ENCODE measurements at regions of chr2 and their contacts with region 1.

Region 1: GRCh38 chr2:85437488-85438284 is 19.2 kb downstream of the SH2D6 start:
- DNase-seq: peak; percentile 63 to 93 (median 86)
- H3K4me3 ChIP-seq: peak overlapping the region; percentile 5 to 63 (median 45)
- H3K27ac ChIP-seq: peak overlapping the region; percentile 86 to 100 (median 100)
- H3K27me3 ChIP-seq: no peaks in the 10 kb centered on the region
- CTCF ChIP-seq: peak in 20 of 56 donors; percentile 4 to 31 (median 22)

Region 2: GRCh38 chr2:84187258-84187657 is 1250.4 kb before region 1 on chr2:
- intact Hi-C with region 1: no loop called
- DNase-seq: no peak
- H3K4me3 ChIP-seq: no peak overlapping the region
- H3K27ac ChIP-seq: no peak overlapping the region
- H3K27me3 ChIP-seq: peaks cover 0 to 3% (median 0%) of the 10 kb centered on the region in 45 donors
- CTCF ChIP-seq: no peak

Region 3: DNA sequence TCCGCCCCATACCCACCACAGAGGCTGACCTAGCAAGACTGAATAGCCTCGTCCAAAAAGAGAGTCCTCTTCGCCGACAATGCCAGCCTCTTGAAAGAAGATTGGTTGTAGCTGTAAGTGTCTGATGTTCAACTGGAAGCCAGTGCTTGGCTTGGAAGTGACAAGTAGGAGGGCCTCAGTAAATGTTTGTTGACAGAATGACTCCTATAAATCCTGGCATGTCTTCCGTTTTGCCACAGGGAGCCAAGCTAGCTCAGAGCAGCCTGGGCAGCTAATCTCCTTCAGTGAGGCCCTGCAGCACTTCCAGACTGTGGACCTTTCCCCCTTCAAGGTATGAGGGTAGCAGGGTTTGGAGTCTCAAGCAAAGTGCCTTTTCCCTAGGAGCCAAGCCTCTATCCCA is 68.2 kb before region 1 on chr2:
- intact Hi-C with region 1: no loop called
- DNase-seq: no peak
- H3K4me3 ChIP-seq: no peak overlapping the region
- H3K27ac ChIP-seq: no peak overlapping the region
- H3K27me3 ChIP-seq: no peaks in the 10 kb centered on the region
- CTCF ChIP-seq: no peak

Region 4: DNA sequence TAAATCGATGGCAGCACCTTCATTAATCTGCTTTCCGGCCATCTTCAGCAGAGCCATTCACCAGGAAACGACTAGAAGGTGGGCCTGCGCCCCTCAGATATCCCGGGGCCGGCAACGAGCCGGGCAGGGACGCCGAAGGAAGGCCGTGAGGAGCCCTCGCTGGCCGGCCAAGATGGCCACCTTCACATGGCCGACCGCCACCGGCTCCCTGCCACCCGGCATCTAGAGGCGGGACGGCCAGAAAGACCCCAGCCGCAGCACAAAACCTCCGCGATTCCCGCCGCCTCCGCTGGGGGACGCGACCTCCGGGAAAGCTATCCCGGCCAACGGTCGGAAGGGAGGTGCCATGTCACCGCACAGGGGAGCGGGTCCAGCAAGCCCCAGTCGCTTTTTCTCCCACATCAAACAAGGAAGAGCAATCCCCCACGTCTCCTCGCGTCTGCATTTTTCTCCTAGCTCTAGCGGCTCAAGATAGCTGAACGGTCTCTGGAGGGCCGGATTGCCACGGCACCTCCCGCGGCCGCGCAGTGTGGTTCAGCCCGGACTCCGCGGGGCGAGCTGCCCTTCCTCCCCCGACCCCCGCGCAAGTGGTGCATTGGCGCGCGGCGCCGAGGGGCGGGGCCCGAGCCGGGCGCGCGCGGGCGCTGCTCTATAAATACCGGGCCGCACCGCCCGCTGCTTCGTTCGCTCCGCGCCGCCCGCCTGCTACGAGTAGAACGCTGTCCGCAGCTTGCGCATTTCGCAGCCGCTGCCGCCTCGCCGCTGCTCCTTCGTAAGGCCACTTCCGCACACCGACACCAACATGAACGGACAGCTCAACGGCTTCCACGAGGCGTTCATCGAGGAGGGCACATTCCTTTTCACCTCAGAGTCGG is 101.0 kb after region 1 on chr2 and contains the start of gene MAT2A:
- intact Hi-C with region 1: loop called (anchors 1 to 2 kb)
- DNase-seq: peak; percentile 83 to 95 (median 90)
- H3K4me3 ChIP-seq: peak within 1 kb of the TSS; percentile 76 to 100 (median 96)
- H3K27ac ChIP-seq: peak within 1 kb of the TSS; percentile 95 to 100 (median 100)
- H3K27me3 ChIP-seq: no peaks in the 10 kb centered on the region
- CTCF ChIP-seq: peak; percentile 53 to 87 (median 72)
- total RNA-seq, gene MAT2A: 193 to 562 (median 276) TPM

Measured in dorsolateral prefrontal cortex (tissue), 120 donors.